Dendritic cell treated with granulocyte-macrophage colony-stimulating factor and Interleukin-4, amounts not matched to agents 40 ng/mL and 50 ng/mL, for 4 days (primary cell): ENCODE measurements at regions of chr5 and their contacts with region 1.

Region 1: DNA sequence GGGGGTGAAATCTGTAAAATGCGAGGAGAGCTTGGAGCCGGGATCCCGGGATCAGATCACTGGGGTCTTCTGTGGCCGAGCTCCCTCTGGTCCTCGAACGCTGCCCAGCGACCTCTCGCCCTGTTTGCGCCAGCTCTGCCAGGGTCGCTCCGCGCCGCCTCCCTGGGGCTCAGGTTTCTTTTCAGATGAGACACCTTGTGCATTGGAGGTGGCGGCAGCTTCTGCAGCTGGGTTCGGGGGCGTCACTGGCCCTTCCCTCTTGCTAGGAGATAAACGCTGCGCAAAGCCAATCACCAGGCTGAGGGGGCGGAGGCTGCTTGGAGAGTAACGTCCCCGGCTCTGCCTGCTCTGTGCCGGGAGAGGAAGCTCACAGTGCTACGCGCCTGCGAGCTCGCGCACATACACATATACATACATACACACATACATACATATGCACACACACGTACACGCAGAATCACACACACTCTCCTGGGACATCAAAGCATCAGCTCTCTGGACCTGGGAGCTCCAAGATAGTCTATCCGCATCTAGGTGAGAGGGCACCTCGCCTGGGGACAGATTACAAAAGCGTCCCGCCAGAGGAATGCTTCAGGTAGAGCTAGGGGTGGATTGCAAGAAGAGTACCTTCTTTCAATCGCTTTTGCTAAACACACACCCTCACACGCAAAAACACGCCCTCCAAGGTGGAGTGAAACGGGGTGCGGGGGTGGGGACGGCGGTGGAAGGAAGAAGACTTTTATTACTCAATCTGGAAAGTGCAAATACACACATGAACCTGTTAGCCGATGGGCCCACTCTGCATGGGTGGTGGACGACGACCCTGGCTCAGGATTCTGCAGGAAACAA is at the start of gene ST8SIA4:
- H3K4me3 Mint-ChIP-seq: peak within 1 kb of the TSS; percentile 99
- H3K27ac Mint-ChIP-seq: peak within 1 kb of the TSS; percentile 99
- H3K4me1 Mint-ChIP-seq: peaks cover 41% of the 10 kb centered on the region
- H3K27me3 Mint-ChIP-seq: no peaks in the 10 kb centered on the region

Region 2: GRCh38 chr5:100535060-100536005 is 367.9 kb before region 1 on chr5 and contains the start of gene FAM174A:
- intact Hi-C with region 1: loop called (anchors 2 kb)
- H3K4me3 Mint-ChIP-seq: peak within 1 kb of the TSS; percentile 90
- H3K27ac Mint-ChIP-seq: peak within 1 kb of the TSS; percentile 89
- H3K4me1 Mint-ChIP-seq: peaks cover 12% of the 10 kb centered on the region
- H3K27me3 Mint-ChIP-seq: no peaks in the 10 kb centered on the region

Region 3: GRCh38 chr5:100623719-100624118 is 279.5 kb before region 1 on chr5:
- intact Hi-C with region 1: loop called (anchors 5 kb)
- H3K4me3 Mint-ChIP-seq: no peak overlapping the region
- H3K27ac Mint-ChIP-seq: no peak overlapping the region
- H3K4me1 Mint-ChIP-seq: peaks cover 6% of the 10 kb centered on the region
- H3K27me3 Mint-ChIP-seq: no peaks in the 10 kb centered on the region

Region 4: GRCh38 chr5:100706776-100707175 is 196.5 kb before region 1 on chr5:
- intact Hi-C with region 1: loop called (anchors 5 kb)
- H3K4me3 Mint-ChIP-seq: no peak overlapping the region
- H3K27ac Mint-ChIP-seq: peak overlapping the region; percentile 63
- H3K4me1 Mint-ChIP-seq: no peaks in the 10 kb centered on the region
- H3K27me3 Mint-ChIP-seq: no peaks in the 10 kb centered on the region

Region 5: DNA sequence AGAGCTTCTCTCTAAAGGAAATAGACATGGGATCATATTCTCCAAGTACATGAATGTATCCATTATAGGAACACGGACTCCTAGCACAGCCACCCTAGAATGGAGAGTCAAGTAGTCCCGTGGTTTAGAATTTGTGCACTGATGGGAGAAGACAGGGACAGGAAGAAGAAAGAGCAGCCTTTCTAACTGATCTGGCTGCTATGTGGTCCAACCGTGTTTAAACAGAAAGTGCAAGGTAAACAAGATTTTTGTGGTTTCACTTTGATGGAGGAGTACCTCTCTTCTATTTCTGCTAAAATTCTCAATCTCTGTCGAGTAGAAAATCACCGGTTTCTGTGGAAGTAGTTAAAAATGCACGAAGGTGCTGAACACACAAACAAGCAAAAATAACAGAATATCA is 171.5 kb before region 1 on chr5:
- intact Hi-C with region 1: no loop called
- H3K4me3 Mint-ChIP-seq: peak overlapping the region; percentile 13
- H3K27ac Mint-ChIP-seq: peak overlapping the region; percentile 69
- H3K4me1 Mint-ChIP-seq: peaks cover 4% of the 10 kb centered on the region
- H3K27me3 Mint-ChIP-seq: no peaks in the 10 kb centered on the region

Region 6: DNA sequence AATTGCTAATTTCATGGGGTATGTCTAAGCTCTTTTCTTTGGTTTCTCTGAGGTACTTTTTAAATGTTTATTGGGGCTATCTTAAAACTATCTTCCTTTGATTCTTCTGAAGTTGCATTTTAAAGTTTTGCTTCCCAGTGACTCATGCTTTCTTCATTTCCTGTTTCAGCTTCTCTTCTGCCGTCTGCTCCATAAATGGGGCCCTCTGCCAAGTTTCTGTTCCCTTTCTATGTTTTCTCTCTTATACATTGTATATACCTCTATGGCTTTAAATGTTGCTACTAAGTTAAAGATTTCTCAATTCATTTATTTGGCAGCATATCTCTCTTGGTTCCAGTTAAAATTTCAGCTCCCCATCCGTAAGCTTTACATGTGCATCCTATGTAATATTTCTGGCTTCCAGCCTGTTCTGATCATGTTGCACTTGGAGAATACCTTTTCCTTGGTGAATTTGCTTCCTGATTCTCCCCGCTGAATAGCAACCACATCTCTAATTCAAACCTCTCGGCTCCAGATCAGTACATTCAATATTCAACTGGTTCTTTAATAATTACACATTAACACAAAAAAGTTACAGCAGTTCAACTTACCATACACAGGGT is 125.5 kb before region 1 on chr5:
- intact Hi-C with region 1: loop called (anchors 2 kb)
- H3K4me3 Mint-ChIP-seq: peak overlapping the region; percentile 0
- H3K27ac Mint-ChIP-seq: peak overlapping the region; percentile 69
- H3K4me1 Mint-ChIP-seq: peaks cover 53% of the 10 kb centered on the region
- H3K27me3 Mint-ChIP-seq: no peaks in the 10 kb centered on the region

Region 7: GRCh38 chr5:100827481-100827889 is 75.8 kb before region 1 on chr5:
- intact Hi-C with region 1: loop called (anchors 1 kb)
- H3K4me3 Mint-ChIP-seq: peak overlapping the region; percentile 57
- H3K27ac Mint-ChIP-seq: peak overlapping the region; percentile 90
- H3K4me1 Mint-ChIP-seq: peaks cover 31% of the 10 kb centered on the region
- H3K27me3 Mint-ChIP-seq: no peaks in the 10 kb centered on the region

Region 8: DNA sequence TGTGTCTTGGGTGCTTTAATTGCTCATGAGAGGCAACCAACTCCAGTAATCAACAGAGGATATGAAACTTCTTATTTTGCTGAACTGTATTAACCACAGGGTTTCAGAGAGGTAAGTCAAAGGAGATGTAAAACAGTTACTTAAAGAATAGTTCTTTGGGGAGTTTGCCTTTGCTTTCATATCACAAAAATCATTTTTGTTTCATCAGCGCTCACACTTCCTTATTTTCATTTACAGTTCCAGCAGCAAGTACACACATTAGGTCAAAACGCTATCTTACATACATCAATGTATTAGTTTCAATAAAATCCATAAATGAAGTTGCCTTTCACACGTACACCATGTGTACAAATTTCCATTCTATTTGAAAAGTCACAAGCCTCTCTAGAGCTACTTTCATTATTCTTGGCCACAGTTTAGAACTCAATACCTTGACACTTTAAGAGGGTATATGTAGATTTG is 50.2 kb before region 1 on chr5:
- intact Hi-C with region 1: loop called (anchors 5 kb)
- H3K4me3 Mint-ChIP-seq: no peak overlapping the region
- H3K27ac Mint-ChIP-seq: peak overlapping the region; percentile 88
- H3K4me1 Mint-ChIP-seq: peaks cover 19% of the 10 kb centered on the region
- H3K27me3 Mint-ChIP-seq: no peaks in the 10 kb centered on the region